ENCODE measurements at regions of chr5 and their contacts with region 1.

Region 1: GRCh38 chr5:165525266-165525665 is 2019.8 kb downstream of the MAT2B start:
- DNase-seq: no peak

Region 2: GRCh38 chr5:164573397-164573796 is 951.9 kb before region 1 on chr5:
- intact Hi-C with region 1: loop called in 1 of 2 experiments (anchors 5 kb)
- DNase-seq: no peak

Region 3: GRCh38 chr5:165616490-165617430 is 91.5 kb after region 1 on chr5:
- intact Hi-C with region 1: no loop called
- DNase-seq: no peak

Measured in posterior vena cava (tissue), 2 donors.